Activated CD4-positive, alpha-beta T cell treated with anti-CD3 and anti-CD28 coated beads for 36 hours (primary cell): ENCODE measurements at regions of chr12 and their contacts with region 1.

Region 1: DNA sequence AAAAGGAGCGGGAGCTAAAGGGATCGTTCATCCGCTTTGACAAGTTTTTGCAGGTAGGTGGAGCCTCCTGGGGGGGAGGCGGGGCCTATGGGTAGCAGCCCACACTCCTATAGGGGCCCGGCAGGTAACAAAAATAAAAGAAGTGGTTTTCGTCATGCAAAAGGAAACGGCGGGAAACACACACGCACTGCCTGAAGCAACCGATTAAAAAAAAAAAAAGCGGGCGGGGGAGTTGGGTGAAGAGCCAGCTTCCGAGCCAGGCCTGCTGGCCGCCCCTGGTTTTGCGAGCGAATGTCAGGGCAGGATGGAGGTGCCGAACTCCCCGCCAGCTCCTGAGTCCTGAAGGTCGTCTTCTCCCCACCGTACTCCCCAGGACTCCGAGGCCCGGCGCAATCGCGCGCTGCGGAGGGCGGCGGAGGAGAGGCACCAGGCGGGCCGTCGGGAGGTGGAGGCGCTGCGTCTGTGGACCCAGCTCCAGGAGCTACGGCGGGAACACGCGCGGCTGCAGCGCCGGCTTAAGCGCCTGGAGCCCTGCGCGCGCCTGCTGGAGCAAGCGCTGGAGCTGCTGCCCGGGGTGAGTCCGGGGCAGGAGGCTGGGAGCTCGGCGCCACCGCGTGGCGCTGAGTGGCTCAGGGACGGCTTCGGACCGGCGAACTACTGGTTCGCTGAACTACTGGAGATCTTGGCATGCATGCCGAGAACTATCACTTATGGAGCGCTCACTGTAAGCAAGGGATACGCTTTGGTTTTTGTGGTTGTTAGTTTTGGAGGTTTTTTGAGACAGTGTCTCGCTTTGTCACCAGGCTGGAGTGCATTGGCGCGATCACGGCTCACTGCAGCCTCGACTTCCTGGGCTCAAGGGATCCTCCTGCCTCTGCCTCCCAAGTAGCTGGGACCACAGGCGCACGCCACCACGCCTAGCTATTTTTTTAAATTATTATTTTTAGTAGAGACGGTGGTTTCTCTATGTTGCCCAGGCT is 3.6 kb downstream of the CFAP73 start:
- DNase-seq: peak; percentile 82
- ATAC-seq: peak; percentile 78
- H3K4me3 Mint-ChIP-seq: peak overlapping the region; percentile 69
- H3K27ac Mint-ChIP-seq: peak overlapping the region; percentile 47
- H3K4me1 Mint-ChIP-seq: peaks cover 17% of the 10 kb centered on the region
- H3K27me3 Mint-ChIP-seq: peaks cover 11% of the 10 kb centered on the region

Region 2: DNA sequence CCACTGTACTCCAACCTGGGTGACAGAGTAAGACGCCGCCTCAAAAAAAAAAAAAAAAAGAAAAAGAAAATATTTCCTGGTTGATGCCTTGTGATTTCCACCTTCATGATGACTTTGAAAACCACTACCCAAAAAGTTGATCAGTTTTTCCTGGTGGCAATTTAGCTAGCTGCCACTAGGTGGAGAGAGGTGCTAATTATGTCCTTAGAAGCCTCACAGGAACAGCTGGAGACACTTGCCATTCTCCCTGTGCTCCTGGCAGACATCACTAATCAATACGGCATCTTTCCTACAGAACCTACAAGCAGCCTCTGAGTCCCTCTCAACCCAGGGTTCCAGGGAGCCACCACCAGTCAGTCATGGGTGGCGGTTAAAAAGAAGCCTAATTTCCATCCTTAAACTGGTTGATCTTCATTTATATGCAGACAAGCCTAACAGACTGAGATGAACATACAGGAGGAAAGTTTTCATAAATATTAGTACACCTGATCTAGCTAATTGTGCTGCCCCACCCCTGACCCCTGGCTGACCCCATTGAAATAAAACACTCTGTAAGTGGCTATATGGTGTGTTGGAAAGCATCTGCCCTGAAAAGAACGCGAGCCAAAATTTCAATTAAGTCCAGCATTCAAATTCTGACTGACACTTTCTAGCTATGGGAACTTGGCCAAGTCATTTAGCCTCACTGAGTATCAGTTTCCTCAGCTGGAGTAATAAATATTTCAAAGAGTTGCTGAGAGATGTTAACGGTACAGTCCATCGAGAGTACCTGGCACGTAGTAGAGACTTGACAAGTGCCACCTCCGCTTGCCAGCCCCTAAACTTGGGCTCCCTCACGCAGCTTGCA is 252.6 kb before region 1 on chr12:
- CTCF ChIA-PET with region 1: interaction called, 3 read pairs
- POLR2A ChIA-PET with region 1: no interaction called
- intact Hi-C with region 1: loop called in 1 of 2 experiments (anchors 1 kb)
- DNase-seq: peak; percentile 62
- ATAC-seq: peak; percentile 76
- H3K4me3 Mint-ChIP-seq: no peak overlapping the region
- H3K27ac Mint-ChIP-seq: no peak overlapping the region
- H3K4me1 Mint-ChIP-seq: peaks cover 19% of the 10 kb centered on the region
- H3K27me3 Mint-ChIP-seq: no peaks in the 10 kb centered on the region

Region 3: DNA sequence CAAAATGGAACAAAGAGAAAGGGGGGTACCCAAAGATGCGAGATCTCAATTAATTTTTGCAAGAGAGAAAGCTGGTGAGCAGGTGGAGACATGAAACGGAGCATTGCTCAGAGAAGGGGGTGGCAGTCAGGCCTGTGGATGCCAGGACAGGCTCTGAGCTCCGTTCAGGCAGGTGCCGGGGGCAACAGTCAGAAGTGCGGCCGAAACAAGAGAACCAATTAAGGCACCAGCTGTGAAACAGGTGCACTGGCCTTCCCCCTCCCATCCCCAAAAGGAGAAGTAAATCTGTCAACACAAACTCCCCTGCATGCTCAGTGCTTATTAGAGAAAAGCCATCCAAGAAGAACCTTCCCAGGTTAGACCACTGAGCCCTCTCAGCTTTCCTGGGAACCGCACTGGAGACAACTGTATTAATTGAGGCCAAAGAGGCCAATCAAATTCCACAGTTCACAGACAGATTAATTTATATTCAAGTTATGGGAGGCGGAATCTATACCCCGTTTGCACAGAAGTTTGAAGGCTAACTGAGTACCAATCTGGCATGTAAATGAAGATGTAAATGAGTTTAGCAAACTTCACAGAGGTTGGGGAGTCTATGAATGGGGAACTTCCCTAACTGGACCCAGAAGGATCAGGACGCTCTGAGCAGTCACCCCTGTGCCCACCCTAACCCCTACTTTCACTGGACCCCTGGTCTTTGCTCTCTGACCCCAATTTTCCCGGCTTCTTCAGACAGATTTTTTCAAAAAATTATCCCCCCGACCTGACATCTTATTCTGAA is 153.9 kb before region 1 on chr12:
- CTCF ChIA-PET with region 1: no interaction called
- POLR2A ChIA-PET with region 1: no interaction called
- intact Hi-C with region 1: no loop called
- DNase-seq: no peak
- ATAC-seq: no peak
- H3K4me3 Mint-ChIP-seq: no peak overlapping the region
- H3K27ac Mint-ChIP-seq: peak overlapping the region; percentile 56
- H3K4me1 Mint-ChIP-seq: no peaks in the 10 kb centered on the region
- H3K27me3 Mint-ChIP-seq: no peaks in the 10 kb centered on the region

Region 4: GRCh38 chr12:113056631-113057488 is 96.3 kb before region 1 on chr12 and contains the start of gene DTX1:
- CTCF ChIA-PET with region 1: interaction called, 4 read pairs
- POLR2A ChIA-PET with region 1: no interaction called
- intact Hi-C with region 1: loop called in 1 of 2 experiments (anchors 2 kb)
- DNase-seq: peak; percentile 63
- ATAC-seq: peak; percentile 57
- H3K4me3 Mint-ChIP-seq: peak within 1 kb of the TSS; percentile 74
- H3K27ac Mint-ChIP-seq: peak within 1 kb of the TSS; percentile 74
- H3K4me1 Mint-ChIP-seq: peaks cover 35% of the 10 kb centered on the region
- H3K27me3 Mint-ChIP-seq: no peaks in the 10 kb centered on the region
- total RNA-seq, gene DTX1: 12.0 to 12.9 TPM

Region 5: DNA sequence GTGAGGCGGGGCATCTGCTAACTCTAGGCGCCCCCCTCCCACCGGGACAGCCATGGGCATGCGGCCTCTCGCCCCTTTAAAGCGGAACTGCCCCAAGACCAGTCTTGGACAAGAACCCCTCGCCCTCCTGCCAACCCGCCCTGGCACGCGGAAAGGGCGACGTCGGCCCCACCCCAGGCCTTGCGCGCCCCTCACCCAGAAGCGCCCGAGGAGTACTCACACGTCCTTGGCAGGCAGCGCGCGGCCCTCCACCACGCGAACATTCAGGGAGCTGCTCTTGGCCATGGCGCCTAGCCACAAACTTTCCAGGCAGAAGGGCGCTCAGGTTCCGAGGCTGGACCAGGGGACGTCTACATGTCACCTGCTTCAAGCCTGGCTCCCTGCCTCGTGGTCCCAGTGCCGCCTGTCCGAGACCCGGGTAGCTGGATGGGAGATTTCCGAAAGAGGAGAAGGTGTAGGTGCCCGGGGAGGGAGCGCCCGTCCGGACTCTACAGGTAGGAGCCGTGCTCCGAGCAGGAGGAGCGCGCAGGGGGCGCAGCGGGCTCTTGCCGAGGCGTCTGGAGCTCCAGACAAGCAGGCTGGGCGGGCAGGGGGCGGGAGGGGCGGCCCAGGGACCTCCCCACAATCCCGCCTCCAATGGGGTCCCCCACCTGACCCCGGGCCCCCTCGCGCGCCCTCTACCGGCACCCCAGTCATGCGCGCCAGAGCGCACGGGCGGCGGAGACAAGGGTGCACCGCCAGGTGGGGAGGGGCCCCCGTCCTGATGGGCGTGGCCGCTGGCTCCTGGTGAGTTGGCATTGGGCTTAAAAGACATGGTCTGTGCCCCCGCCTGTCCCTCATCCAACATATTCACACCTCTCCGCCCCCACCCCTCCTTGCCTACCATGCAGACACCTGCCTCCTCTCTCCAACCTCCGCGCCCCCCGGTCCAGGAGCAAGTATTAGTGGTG is 17.7 kb before region 1 on chr12 and contains the start of gene RASAL1:
- CTCF ChIA-PET with region 1: interaction called, 57 read pairs
- POLR2A ChIA-PET with region 1: interaction called, 3 read pairs
- intact Hi-C with region 1: loop called (anchors 1 to 2 kb)
- DNase-seq: peak; percentile 96
- ATAC-seq: peak; percentile 92
- H3K4me3 Mint-ChIP-seq: peak within 1 kb of the TSS; percentile 73
- H3K27ac Mint-ChIP-seq: peak within 1 kb of the TSS; percentile 92
- H3K4me1 Mint-ChIP-seq: peaks cover 16% of the 10 kb centered on the region
- H3K27me3 Mint-ChIP-seq: no peaks in the 10 kb centered on the region
- total RNA-seq, gene RASAL1: 9.0 to 10.6 TPM

Region 6: GRCh38 chr12:113174461-113175384 is 21.6 kb after region 1 on chr12:
- CTCF ChIA-PET with region 1: interaction called, 30 read pairs
- POLR2A ChIA-PET with region 1: no interaction called
- intact Hi-C with region 1: no loop called
- DNase-seq: peak; percentile 88
- ATAC-seq: peak; percentile 75
- H3K4me3 Mint-ChIP-seq: no peak overlapping the region
- H3K27ac Mint-ChIP-seq: no peak overlapping the region
- H3K4me1 Mint-ChIP-seq: peaks cover 2% of the 10 kb centered on the region
- H3K27me3 Mint-ChIP-seq: no peaks in the 10 kb centered on the region

Region 7: DNA sequence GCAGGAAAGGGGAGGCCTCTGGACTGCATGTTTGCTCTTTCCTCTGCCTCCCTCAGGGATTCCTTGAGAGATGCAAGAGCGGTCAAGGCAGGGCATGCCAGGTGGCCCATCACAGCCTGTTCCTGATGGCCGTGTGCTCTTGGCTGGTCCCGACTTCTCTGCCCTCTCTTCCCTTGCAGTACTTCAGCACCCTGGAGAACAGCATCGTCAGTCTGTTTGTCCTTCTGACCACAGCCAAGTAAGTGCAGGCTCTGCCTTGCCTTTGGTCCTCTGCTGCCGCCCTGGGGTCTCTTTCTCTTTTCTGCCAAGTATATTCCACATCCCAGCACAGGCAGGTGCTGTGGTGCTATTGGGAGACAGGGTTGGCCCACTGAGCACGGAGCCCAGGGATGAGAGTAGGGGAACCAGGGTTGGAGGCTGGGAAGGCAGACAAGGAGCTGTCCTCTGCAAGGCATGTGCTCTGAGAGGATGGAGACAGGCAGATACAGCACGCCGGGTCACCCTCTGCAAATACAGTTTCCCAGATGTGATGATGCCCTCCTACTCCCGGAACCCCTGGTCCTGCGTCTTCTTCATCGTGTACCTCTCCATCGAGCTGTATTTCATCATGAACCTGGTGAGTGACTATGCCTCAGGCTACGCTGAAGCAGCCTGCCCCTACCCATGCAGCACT is 120.1 kb after region 1 on chr12:
- CTCF ChIA-PET with region 1: no interaction called
- POLR2A ChIA-PET with region 1: no interaction called
- intact Hi-C with region 1: no loop called
- DNase-seq: no peak
- ATAC-seq: no peak
- H3K4me3 Mint-ChIP-seq: no peak overlapping the region
- H3K27ac Mint-ChIP-seq: no peak overlapping the region
- H3K4me1 Mint-ChIP-seq: peaks cover 15% of the 10 kb centered on the region
- H3K27me3 Mint-ChIP-seq: no peaks in the 10 kb centered on the region